GM13977 (cell line): ENCODE measurements at regions of chr3 and their contacts with region 1.

Region 1: GRCh38 chr3:184417619-184418327 is 37.9 kb downstream of the CHRD start:
- DNase-seq: peak; percentile 77
- CTCF ChIP-seq: peak; percentile 99

Region 2: GRCh38 chr3:183653209-183654064 is 764.3 kb before region 1 on chr3:
- in situ Hi-C with region 1: no loop called
- DNase-seq: no peak
- CTCF ChIP-seq: no peak

Region 3: GRCh38 chr3:184513276-184514170 is 95.8 kb after region 1 on chr3:
- in situ Hi-C with region 1: loop called (anchors 25 kb)
- DNase-seq: peak; percentile 90
- CTCF ChIP-seq: peak; percentile 89